Dorsolateral prefrontal cortex (tissue), 120 donors: ENCODE measurements at regions of chr20 and their contacts with region 1.

Region 1: GRCh38 chr20:3679749-3680700 is 1.8 kb downstream of the ADAM33 start:
- DNase-seq: no peak
- H3K4me3 ChIP-seq: peak overlapping the region in 11 of 59 donors; percentile 9 to 65 (median 56)
- H3K27ac ChIP-seq: peak overlapping the region in 21 of 59 donors; percentile 5 to 69 (median 32)
- H3K27me3 ChIP-seq: peaks cover 0 to 29% (median 11%) of the 10 kb centered on the region in 45 donors
- CTCF ChIP-seq: no peak

Region 2: GRCh38 chr20:3000852-3001523 is 679.0 kb before region 1 on chr20:
- intact Hi-C with region 1: no loop called
- DNase-seq: peak in 1 of 10 donors; percentile 9
- H3K4me3 ChIP-seq: no peak overlapping the region
- H3K27ac ChIP-seq: peak overlapping the region in 1 of 59 donors; percentile 67
- H3K27me3 ChIP-seq: no peaks in the 10 kb centered on the region
- CTCF ChIP-seq: peak in 55 of 56 donors; percentile 30 to 88 (median 69)

Region 3: DNA sequence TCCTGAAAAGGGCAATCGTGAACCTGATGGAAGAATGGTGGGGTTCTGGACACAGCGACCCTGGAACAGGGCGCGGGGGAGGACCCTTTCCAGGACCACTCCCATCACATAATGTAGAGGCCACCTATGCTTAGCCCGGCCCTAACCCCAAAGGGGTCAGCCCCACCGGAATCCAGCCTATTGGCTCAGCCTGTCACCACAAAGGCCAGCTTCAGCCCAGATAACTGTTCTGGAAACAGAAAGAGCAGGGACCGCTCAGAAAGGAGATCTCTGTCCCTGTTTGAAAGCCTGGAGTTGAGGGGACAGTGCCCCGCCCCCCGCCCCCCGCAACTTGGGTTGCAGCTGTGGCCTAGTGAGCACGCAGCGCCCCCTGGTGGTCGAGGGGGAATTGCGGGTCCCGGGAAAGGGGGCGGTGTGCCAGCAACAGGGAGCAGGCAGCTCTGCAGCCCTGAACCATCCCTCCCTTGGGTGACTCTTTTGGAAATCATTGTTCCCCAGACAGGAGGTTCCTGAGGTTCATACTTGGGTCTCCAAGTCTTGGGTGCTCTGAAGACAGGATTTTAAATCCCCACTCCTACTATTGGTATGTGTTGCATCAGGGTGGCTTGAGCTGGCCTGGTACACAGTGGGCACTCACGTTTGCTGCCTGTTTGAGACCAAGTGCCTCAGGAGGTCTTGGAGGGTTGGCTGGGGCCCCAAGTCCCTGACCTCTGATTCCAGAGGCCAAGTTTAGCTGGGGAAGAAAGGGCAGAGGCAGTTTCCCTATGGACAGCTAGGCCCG is 30.9 kb after region 1 on chr20:
- intact Hi-C with region 1: loop called (anchors 1 kb)
- DNase-seq: peak in 8 of 10 donors; percentile 28 to 82 (median 70)
- H3K4me3 ChIP-seq: peak overlapping the region in 3 of 59 donors; percentile 0 to 18 (median 2)
- H3K27ac ChIP-seq: peak overlapping the region in 5 of 59 donors; percentile 0 to 38 (median 27)
- H3K27me3 ChIP-seq: no peaks in the 10 kb centered on the region
- CTCF ChIP-seq: peak; percentile 82 to 99 (median 96)

Region 4: DNA sequence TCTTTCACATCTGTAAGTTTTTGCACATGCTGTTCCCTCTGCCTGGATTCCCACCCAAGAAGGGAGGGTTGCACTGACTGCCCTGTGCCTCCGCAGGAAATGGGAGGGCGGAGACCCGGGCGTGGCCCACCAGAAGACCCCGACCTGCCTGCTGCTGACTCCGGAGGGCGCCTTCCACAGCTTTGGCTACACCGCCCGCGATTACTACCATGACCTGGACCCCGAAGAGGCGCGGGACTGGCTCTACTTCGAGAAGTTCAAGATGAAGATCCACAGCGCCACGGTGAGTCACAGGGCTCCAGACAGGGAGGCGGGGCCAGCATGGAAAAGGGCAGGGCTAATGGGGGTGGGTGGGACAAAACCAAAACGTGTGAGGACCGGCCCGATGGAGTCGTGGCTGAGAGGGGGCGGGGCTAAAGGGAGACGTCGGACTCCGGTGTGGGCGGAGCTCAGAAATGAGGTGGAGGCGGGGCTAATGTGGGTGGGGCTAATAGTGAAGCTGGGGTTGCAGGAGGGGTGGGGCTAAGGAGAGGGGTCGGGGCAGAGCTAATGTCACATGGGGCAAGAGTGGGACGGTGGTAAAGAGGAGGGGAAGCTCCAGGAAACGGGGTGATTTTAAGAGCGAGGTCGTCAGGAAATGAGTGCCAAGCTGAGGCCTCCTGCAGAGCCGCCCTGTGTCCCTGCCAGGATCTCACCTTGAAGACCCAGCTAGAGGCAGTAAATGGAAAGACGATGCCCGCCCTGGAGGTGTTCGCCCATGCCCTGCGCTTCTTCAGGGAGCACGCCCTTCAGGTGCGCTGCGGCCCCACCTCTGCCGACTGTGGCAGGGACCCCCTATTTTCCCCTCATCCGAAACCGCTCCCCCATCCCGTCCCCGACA is 65.0 kb after region 1 on chr20:
- intact Hi-C with region 1: loop called in 1 of 2 experiments (anchors 5 kb)
- DNase-seq: peak in 1 of 10 donors; percentile 24
- H3K4me3 ChIP-seq: peak overlapping the region in 10 of 59 donors; percentile 6 to 37 (median 15)
- H3K27ac ChIP-seq: no peak overlapping the region
- H3K27me3 ChIP-seq: peaks cover 0 to 22% (median 0%) of the 10 kb centered on the region in 45 donors
- CTCF ChIP-seq: no peak

Region 5: DNA sequence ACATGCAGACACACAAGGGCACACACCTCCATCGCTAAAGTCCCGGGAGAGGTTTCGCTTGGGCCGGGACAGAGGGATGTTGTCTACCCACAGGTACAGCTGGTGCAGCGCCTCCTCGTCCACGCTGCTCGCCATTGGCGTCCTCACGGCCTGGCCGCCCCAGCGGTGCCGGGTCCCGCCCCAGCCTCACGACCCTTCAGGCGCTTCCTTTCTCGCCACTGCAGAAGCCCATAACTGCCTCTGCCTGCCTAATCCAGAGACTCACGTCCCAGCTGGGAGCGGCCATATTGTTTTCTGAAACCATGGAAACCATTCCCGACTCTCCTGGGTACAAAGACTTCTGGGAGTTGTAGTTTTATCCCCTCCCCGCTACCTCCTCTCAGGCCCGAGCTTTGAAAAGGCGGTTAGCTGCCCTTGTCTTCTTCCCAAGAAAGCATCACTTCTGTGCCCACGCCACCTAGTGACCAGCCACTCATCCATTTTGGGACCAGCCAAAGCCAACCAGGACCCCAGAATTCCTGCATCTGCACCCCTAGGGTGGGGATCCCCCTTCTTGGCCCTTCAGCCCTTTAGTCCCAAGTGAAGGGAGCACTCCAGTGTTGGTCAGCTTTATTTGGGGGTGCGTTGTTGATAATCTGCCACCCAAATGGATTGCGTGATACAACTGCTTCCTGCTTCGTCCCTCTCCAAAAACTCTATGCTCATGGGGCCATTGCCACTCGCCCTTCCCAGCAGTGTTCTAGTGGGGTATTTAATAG is 101.3 kb after region 1 on chr20 and contains the start of gene SPEF1:
- intact Hi-C with region 1: loop called in 1 of 2 experiments (anchors 5 kb)
- DNase-seq: peak; percentile 38 to 91 (median 82)
- H3K4me3 ChIP-seq: peak within 1 kb of the TSS; percentile 31 to 73 (median 53)
- H3K27ac ChIP-seq: peak within 1 kb of the TSS in 54 of 59 donors; percentile 10 to 87 (median 70)
- H3K27me3 ChIP-seq: no peaks in the 10 kb centered on the region
- CTCF ChIP-seq: peak in 55 of 56 donors; percentile 36 to 81 (median 58)
- total RNA-seq, gene SPEF1: 2.0 to 11.0 (median 5.3) TPM

Region 6: DNA sequence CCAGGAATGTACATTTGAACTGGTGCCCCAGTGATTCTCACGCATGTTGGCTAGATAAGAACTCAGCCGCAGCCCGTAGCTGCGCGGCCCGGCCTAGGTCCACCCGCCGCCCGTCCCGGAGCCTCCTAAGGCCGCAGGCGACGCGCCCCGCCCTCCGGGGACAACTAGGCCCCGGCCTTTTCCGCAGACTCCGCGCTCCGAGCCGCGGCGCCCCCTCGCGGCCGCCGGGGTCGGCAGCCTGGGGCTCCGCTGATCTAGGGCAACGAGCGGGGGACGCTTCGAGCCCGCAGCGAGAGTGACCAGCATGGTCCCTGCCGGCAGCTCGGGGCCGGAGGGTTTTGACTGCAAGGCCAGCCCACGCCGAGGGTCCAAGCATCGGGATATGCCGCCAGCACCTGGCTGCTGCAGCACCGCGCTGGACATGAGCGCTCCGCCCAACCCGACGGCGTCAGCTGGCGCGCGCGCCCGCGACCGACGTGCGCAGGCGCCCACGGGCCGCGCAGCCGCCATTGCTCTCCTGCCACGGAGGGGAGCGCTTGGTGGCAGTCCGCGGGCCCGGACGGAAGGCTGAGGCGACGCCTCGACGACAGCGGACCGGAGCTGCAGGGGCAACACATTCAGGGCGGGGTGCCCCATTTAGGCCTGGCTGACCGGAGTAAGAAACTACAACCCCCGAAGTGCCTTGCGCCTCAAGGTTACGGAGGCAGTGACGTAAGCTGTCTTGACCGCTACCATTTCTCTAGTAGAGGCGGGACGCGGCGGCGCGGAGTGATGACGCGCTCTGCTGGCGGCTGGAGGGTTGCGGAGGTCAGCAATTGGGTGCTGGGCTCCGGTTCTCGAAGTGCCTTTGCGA is 140.2 kb after region 1 on chr20 and contains the start of gene AP5S1:
- intact Hi-C with region 1: loop called in 1 of 2 experiments (anchors 5 kb)
- DNase-seq: peak; percentile 95 to 98 (median 97)
- H3K4me3 ChIP-seq: peak within 1 kb of the TSS; percentile 47 to 96 (median 80)
- H3K27ac ChIP-seq: peak within 1 kb of the TSS; percentile 94 to 100 (median 100)
- H3K27me3 ChIP-seq: no peaks in the 10 kb centered on the region
- CTCF ChIP-seq: peak in 55 of 56 donors; percentile 86 to 100 (median 99)
- total RNA-seq, gene AP5S1: 9.8 to 22.0 (median 15.9) TPM

Region 7: GRCh38 chr20:3854462-3854871 is 174.4 kb after region 1 on chr20:
- intact Hi-C with region 1: loop called in 1 of 2 experiments (anchors 10 kb)
- DNase-seq: no peak
- H3K4me3 ChIP-seq: no peak overlapping the region
- H3K27ac ChIP-seq: no peak overlapping the region
- H3K27me3 ChIP-seq: no peaks in the 10 kb centered on the region
- CTCF ChIP-seq: no peak

Region 8: GRCh38 chr20:4082406-4083097 is 402.5 kb after region 1 on chr20:
- intact Hi-C with region 1: loop called in 1 of 2 experiments (anchors 2 kb)
- DNase-seq: no peak
- H3K4me3 ChIP-seq: no peak overlapping the region
- H3K27ac ChIP-seq: peak overlapping the region in 2 of 59 donors; percentile 4 to 43
- H3K27me3 ChIP-seq: no peaks in the 10 kb centered on the region
- CTCF ChIP-seq: no peak